ENCODE measurements at regions of chr16 and their contacts with region 1.

Region 1: DNA sequence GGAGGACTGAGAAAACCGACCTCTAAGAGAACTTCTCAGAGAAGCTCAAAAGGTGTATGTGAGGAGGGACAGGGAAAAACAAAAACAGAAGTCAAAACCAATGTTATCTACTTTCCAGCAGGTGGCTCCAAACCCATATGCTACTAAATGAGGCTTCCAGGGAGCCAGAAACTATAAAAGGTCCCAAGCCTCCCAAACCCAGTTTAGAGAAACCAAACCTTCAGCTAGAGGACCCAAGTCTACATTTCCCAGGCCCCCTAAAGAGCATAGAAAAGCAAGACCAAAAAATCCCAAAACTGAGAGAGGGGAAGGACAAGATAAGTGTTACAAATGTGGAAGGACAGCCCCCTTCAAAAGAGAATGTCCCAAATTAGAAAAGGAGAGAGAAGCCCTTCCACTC is 3.7 kb downstream of the HPR start:
- DNase-seq: peak; percentile 39
- H3K4me3 ChIP-seq: no peak overlapping the region
- H3K27ac ChIP-seq: no peak overlapping the region
- H3K4me1 ChIP-seq: no peaks in the 10 kb centered on the region
- H3K27me3 ChIP-seq: peaks cover 0 to 1% of the 10 kb centered on the region in 2 experiments
- CTCF ChIP-seq: peak; percentile 36 to 52
- POLR2A ChIP-seq: no peak

Region 2: GRCh38 chr16:72099377-72099818 is 32.7 kb after region 1 on chr16:
- CTCF ChIA-PET with region 1: interaction called, 16 read pairs
- POLR2A ChIA-PET with region 1: no interaction called
- dilution Hi-C with region 1: no loop called
- intact Hi-C with region 1: loop called (anchors 1 kb)
- DNase-seq: peak; percentile 63
- H3K4me3 ChIP-seq: no peak overlapping the region
- H3K27ac ChIP-seq: no peak overlapping the region
- H3K4me1 ChIP-seq: peaks cover 10% of the 10 kb centered on the region
- H3K27me3 ChIP-seq: no peaks in the 10 kb centered on the region
- CTCF ChIP-seq: peak; percentile 60 to 65
- POLR2A ChIP-seq: no peak

Region 3: GRCh38 chr16:73956587-73957494 is 1890.1 kb after region 1 on chr16:
- CTCF ChIA-PET with region 1: interaction called, 3 read pairs
- POLR2A ChIA-PET with region 1: no interaction called
- dilution Hi-C with region 1: no loop called
- intact Hi-C with region 1: loop called (anchors 10 kb)
- DNase-seq: peak; percentile 53
- H3K4me3 ChIP-seq: no peak overlapping the region
- H3K27ac ChIP-seq: no peak overlapping the region
- H3K4me1 ChIP-seq: no peaks in the 10 kb centered on the region
- H3K27me3 ChIP-seq: no peaks in the 10 kb centered on the region
- CTCF ChIP-seq: peak; percentile 69 to 72
- POLR2A ChIP-seq: no peak